ENCODE measurements at regions of chr13 and their contacts with region 1.

Region 1: DNA sequence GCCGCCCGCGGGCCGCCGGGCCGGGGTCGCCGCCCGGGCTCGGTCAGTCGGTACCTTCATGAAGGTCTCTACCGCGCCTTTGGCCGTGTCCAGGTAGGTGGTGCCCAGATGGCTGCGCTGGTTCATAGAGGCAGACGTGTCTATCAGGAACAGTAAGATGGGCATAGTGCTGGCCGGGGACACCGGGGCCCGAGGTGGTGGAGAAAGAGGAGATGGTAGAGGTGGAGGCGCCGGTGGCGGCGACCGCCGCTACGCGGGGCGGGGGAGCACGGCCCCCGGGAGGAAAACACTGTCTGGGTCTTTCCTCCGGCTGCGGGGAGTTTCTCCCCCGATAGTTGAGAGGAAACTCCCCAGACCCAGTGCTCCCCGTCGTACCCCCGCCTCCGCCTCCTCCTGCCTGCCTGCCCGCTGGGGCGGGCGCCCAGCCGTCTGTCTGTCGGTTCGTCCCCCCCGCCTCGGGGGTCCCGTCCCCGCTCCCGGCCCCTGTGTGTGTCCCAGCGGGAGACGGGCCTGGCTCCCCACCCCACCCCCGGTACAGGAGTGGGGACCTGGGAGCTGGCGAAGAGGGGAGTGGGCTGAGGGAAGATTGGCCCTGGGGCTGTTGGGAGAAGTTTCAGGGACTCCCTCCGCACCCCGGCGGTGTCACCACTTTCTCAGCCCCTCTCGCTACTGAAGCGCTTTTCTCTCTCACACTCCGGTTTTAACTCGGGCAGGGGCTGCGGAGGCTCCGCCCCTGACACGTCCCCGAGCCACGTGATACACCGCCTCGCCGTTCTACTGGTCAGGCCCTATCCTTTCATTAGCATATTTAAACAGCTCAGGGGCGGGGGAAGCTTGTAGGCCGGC is at the start of gene INTS6:
- DNase-seq: peak; percentile 98
- H3K4me3 ChIP-seq: peak within 1 kb of the TSS; percentile 88
- H3K27ac ChIP-seq: peak within 1 kb of the TSS; percentile 90
- H3K27me3 ChIP-seq: no peaks in the 10 kb centered on the region
- CTCF ChIP-seq: no peak
- polyA plus RNA-seq, gene INTS6: 38.1 and 53.7 TPM in 2 replicates

Region 2: DNA sequence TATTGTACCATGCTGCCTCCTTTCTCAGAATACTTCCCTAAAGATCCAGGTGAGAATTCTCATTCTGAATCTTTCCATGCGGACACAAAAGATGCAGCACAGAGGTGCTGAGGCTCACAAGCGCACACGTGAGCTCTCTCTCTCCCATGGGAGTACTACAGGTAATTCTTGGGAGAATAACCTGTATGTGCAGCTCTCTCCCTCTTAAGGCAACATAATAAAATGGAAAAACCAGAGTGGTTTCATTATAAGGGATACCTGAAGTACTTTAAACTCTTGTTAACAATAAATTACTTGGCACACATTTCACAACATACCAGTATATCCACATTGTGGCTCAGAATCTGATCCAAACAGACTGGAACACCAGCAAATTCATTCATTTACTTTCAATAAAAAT is 40.2 kb before region 1 on chr13:
- CTCF ChIA-PET with region 1: no interaction called
- POLR2A ChIA-PET with region 1: no interaction called
- DNase-seq: no peak
- H3K4me3 ChIP-seq: no peak overlapping the region
- H3K27ac ChIP-seq: no peak overlapping the region
- H3K27me3 ChIP-seq: no peaks in the 10 kb centered on the region
- CTCF ChIP-seq: no peak

Region 3: GRCh38 chr13:51520524-51520923 is 67.9 kb after region 1 on chr13:
- CTCF ChIA-PET with region 1: no interaction called
- POLR2A ChIA-PET with region 1: interaction called, 28 read pairs
- DNase-seq: peak; percentile 59
- H3K4me3 ChIP-seq: no peak overlapping the region
- H3K27ac ChIP-seq: peak overlapping the region; percentile 33
- H3K27me3 ChIP-seq: no peaks in the 10 kb centered on the region
- CTCF ChIP-seq: no peak

Region 4: GRCh38 chr13:51583875-51584730 is 131.5 kb after region 1 on chr13 and contains the start of gene WDFY2:
- CTCF ChIA-PET with region 1: interaction called, 5 read pairs
- POLR2A ChIA-PET with region 1: interaction called, 53 read pairs
- DNase-seq: peak; percentile 100
- H3K4me3 ChIP-seq: peak within 1 kb of the TSS; percentile 86
- H3K27ac ChIP-seq: peak within 1 kb of the TSS; percentile 90
- H3K27me3 ChIP-seq: no peaks in the 10 kb centered on the region
- CTCF ChIP-seq: no peak
- polyA plus RNA-seq, gene WDFY2: 6.3 and 6.6 TPM in 2 replicates

Region 5: GRCh38 chr13:51629491-51630287 is 177.1 kb after region 1 on chr13:
- CTCF ChIA-PET with region 1: no interaction called
- POLR2A ChIA-PET with region 1: interaction called, 10 read pairs
- DNase-seq: no peak
- H3K4me3 ChIP-seq: no peak overlapping the region
- H3K27ac ChIP-seq: no peak overlapping the region
- H3K27me3 ChIP-seq: no peaks in the 10 kb centered on the region
- CTCF ChIP-seq: no peak

Region 6: DNA sequence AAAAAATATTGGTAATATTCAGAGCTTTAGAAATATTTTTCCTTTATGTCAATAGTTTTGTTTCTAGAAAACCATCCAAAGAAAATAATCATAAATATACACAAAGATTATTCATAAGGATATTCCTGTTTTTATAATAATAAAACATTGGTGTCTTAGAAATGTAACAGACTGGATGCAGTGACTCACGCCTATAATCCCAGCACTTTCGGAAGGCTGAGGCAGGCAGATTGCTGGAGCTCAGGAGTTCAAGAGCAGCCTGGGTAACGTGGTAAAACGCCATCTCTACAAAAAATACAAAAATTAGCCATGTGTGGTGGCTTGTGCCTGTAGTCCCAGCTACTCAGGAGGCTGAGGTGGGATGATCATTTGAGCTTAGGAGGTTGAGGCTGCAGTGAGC is 244.6 kb after region 1 on chr13:
- CTCF ChIA-PET with region 1: no interaction called
- POLR2A ChIA-PET with region 1: interaction called, 10 read pairs
- DNase-seq: no peak
- H3K4me3 ChIP-seq: no peak overlapping the region
- H3K27ac ChIP-seq: no peak overlapping the region
- H3K27me3 ChIP-seq: no peaks in the 10 kb centered on the region
- CTCF ChIP-seq: no peak

Region 7: GRCh38 chr13:51764184-51765141 is 311.9 kb after region 1 on chr13:
- CTCF ChIA-PET with region 1: no interaction called
- POLR2A ChIA-PET with region 1: interaction called, 15 read pairs
- DNase-seq: peak; percentile 77
- H3K4me3 ChIP-seq: peak overlapping the region; percentile 39
- H3K27ac ChIP-seq: peak overlapping the region; percentile 83
- H3K27me3 ChIP-seq: no peaks in the 10 kb centered on the region
- CTCF ChIP-seq: 0 out of 2 replicates have a peak, but pooled peaks have one; percentile 6

Region 8: DNA sequence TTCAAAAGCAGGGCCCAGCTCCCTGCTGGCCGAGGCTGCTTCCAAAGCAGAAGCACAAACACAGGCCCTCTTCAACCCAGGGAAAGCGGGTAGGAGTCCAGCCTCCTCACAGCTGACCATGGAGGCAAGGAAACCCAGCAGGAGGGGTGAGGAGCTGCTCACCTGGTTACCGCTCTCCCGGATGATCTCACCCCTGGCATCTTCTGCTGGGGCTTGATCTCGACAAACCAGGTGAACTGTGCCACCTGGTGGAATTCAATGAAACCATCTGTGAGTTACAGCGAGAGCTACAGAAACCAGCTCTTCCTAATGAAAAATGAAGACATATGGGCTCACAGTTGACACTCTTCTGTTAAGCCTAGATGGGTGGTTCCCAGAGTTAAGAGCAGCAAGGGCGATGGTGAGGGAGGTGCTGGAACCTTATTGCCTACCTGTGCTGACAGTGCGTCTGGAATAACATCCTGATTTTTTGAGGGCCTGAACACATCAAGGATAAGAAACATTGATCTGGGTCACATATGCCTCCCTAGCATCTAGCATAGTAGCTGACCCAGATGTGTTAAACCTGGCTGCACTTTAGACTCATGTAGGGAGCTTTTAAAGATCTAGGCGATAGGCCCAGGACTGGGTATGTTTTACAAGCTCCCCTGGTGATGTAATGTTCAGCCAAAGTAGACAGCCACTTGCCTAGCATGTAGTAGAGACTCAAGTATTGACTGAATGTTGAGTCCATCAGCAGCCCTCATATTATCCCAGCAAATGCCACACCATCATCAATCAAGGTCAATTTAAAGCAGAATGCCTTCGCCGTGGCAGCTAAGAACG is 345.3 kb after region 1 on chr13:
- CTCF ChIA-PET with region 1: interaction called, 3 read pairs
- POLR2A ChIA-PET with region 1: interaction called, 16 read pairs
- DNase-seq: no peak
- H3K4me3 ChIP-seq: no peak overlapping the region
- H3K27ac ChIP-seq: no peak overlapping the region
- H3K27me3 ChIP-seq: peaks cover 7% of the 10 kb centered on the region
- CTCF ChIP-seq: peak; percentile 46